ENCODE measurements at regions of chr22 and their contacts with region 1.

Region 1: GRCh38 chr22:41966607-41967240 is 2.5 kb upstream of the SEPTIN3 start:
- DNase-seq: peak in 2 of 5 donors; percentile 20 to 33
- H3K4me3 ChIP-seq: no peak overlapping the region
- H3K4me3 Mint-ChIP-seq: no peak overlapping the region
- H3K27ac ChIP-seq: no peak overlapping the region
- H3K27ac Mint-ChIP-seq: no peak overlapping the region
- H3K4me1 ChIP-seq: no peaks in the 10 kb centered on the region
- H3K4me1 Mint-ChIP-seq: no peaks in the 10 kb centered on the region
- H3K27me3 ChIP-seq: no peaks in the 10 kb centered on the region
- H3K27me3 Mint-ChIP-seq: peaks cover 5 to 14% of the 10 kb centered on the region in 2 donors

Region 2: DNA sequence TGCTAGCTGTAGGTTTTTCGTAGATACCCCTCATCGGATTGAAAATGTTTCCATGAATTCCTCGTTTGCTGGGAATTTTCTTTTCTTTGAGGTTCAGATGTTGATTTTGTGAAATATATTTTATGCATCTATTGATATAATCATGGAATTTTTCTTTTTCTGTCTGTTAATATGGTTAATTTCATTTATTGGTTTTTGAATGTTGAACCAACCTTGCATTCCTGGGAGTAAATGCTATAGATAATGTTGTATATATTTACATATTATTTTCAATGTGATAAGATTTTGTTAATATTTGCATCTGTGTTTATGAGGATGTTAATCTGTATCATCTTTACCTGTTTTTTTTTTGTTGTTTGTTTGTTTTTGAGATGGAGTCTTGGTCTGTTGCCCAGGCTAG is 134.5 kb after region 1 on chr22:
- CTCF ChIA-PET with region 1: no interaction called
- POLR2A ChIA-PET with region 1: interaction called, 13 read pairs
- DNase-seq: no peak
- H3K4me3 ChIP-seq: no peak overlapping the region
- H3K4me3 Mint-ChIP-seq: no peak overlapping the region
- H3K27ac ChIP-seq: no peak overlapping the region
- H3K27ac Mint-ChIP-seq: no peak overlapping the region
- H3K4me1 ChIP-seq: no peaks in the 10 kb centered on the region
- H3K4me1 Mint-ChIP-seq: no peaks in the 10 kb centered on the region
- H3K27me3 ChIP-seq: no peaks in the 10 kb centered on the region
- H3K27me3 Mint-ChIP-seq: no peaks in the 10 kb centered on the region

Region 3: GRCh38 chr22:42444077-42444904 is 477.6 kb after region 1 on chr22:
- CTCF ChIA-PET with region 1: interaction called, 11 read pairs
- POLR2A ChIA-PET with region 1: no interaction called
- DNase-seq: peak; percentile 63 to 85 (median 77)
- H3K4me3 ChIP-seq: peak overlapping the region; percentile 87
- H3K4me3 Mint-ChIP-seq: peak overlapping the region; percentile 55 to 91 (median 79)
- H3K27ac ChIP-seq: peak overlapping the region; percentile 67
- H3K27ac Mint-ChIP-seq: peak overlapping the region; percentile 76 to 96 (median 90)
- H3K4me1 ChIP-seq: peaks cover 20% of the 10 kb centered on the region
- H3K4me1 Mint-ChIP-seq: peaks cover 15 to 21% (median 18%) of the 10 kb centered on the region in 3 donors
- H3K27me3 ChIP-seq: no peaks in the 10 kb centered on the region
- H3K27me3 Mint-ChIP-seq: peaks cover under 1% of the 10 kb centered on the region in 2 donors

Region 4: GRCh38 chr22:42511401-42511891 is 544.7 kb after region 1 on chr22:
- CTCF ChIA-PET with region 1: no interaction called
- POLR2A ChIA-PET with region 1: no interaction called
- DNase-seq: no peak
- H3K4me3 ChIP-seq: no peak overlapping the region
- H3K4me3 Mint-ChIP-seq: no peak overlapping the region
- H3K27ac ChIP-seq: no peak overlapping the region
- H3K27ac Mint-ChIP-seq: peak overlapping the region in 4 of 8 donors; percentile 7 to 67 (median 36)
- H3K4me1 ChIP-seq: no peaks in the 10 kb centered on the region
- H3K4me1 Mint-ChIP-seq: peaks cover 0 to 2% (median 0%) of the 10 kb centered on the region in 3 donors
- H3K27me3 ChIP-seq: no peaks in the 10 kb centered on the region
- H3K27me3 Mint-ChIP-seq: no peaks in the 10 kb centered on the region

Measured in CD8-positive, alpha-beta memory T cell (primary cell).